Heart left ventricle (tissue), 16 donors: ENCODE measurements at regions of chr1 and their contacts with region 1.

Region 1: DNA sequence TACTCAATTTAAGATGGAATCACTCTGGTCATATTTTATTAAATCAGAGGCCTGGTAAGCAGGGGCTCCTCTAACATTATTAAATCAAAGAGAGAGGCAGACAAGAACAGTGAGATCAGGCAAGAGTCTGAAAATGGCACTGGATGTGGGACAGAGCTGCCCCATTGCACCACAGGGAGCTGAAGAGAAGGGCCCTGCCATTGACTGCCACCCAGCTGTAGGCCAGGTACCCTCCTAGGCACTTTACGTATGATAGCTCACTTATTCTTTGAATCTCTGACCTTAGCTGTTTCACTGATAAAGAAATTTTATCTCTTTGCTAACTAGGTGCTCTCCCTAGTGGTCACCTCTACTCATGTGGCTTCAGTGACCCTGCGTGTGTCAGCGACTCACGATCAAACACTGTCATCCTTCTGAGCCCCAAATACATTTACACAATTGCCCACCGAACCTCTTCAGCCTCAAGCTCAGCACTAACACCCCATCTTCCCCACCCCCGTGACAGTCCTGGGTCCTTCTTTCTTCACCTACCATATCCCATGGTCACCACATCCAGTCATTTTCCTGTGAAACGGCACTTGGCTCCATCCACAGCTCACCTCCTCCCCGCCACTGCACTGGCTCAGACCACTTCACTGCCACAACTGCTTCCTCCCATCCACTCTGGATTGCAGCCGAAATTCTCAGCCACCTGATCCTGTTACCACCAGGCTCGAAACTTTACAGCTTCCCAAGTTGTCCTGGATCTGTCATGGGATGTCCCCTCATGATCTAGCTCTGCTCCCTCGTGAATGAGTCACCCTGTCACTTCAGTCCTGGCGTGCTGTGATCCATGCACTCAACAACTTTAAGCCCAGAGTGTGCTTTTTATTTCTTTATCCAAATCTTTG is 97.3 kb upstream of the SYT6 start:
- DNase-seq: peak in 2 of 5 donors; percentile 21 to 43
- ATAC-seq: peak; percentile 55 to 92 (median 81)
- H3K4me3 ChIP-seq: no peak overlapping the region
- H3K27ac ChIP-seq: peak overlapping the region in 2 of 12 donors; percentile 13 to 41
- H3K4me1 ChIP-seq: peaks cover 0 to 15% (median 0%) of the 10 kb centered on the region in 12 donors
- H3K27me3 ChIP-seq: no peaks in the 10 kb centered on the region
- CTCF ChIP-seq: no peak
- POLR2A ChIP-seq: no peak

Region 2: GRCh38 chr1:114235960-114236359 is 15.0 kb before region 1 on chr1:
- intact Hi-C with region 1: loop called in 1 of 10 experiments (anchors 1 kb)
- DNase-seq: peak in 2 of 5 donors; percentile 25 to 50
- ATAC-seq: peak; percentile 89 to 93 (median 92)
- H3K4me3 ChIP-seq: no peak overlapping the region
- H3K27ac ChIP-seq: peak overlapping the region in 7 of 12 donors; percentile 13 to 50 (median 27)
- H3K4me1 ChIP-seq: peaks cover 0 to 13% (median 3%) of the 10 kb centered on the region in 12 donors
- H3K27me3 ChIP-seq: no peaks in the 10 kb centered on the region
- CTCF ChIP-seq: no peak
- POLR2A ChIP-seq: no peak